CD4-positive, alpha-beta T cell (primary cell): ENCODE measurements at regions of chr20 and their contacts with region 1.

Region 1: DNA sequence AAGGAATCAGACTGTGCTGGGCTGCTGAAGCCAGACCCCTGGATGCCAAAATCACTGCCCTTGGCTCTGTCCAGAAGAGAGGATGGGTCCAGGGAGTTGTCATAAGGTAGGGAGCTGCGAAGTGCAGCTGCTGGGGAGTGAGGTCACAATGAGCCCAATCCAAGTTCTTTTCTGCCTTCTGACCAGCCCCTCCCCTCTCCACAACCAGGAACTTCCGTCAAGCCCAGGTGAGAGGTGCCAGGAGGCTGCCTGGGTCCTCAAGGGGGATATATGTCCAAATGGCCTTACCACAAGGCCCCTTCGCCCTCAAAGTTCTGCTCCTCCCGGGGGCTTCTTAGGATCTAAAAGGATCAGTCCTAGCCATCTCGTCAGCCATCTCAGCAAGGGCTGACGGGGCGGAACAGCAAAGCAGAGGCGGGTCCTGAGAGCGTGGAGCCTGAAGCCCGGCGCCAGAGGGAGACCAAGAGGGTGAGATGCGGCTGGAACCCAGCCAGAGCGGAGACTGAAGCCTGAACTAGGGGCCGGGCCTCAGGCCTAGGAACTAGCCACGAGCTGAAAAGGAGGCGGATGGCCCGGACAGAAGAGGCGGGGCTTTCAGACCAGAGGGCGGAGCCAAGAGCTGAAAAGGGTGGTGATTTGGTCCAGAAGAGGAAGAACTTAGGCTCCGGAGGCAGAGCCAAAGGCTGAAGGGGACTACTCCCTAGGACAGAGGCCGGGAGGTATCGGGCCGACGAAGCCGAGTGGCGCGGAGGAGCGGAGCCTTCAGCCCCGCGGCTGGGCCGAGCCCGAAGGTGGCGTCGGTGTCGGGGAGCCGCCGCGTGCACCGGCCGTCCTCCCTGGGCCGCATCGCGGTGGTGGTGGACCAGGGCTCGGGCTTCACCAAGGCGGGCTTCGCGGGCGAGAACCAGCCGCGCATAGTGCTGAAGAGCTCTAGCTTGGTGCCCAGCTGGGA is at the start of gene ACTL10:
- DNase-seq: peak; percentile 54 to 92 (median 69)
- ATAC-seq: peak; percentile 46
- H3K4me3 ChIP-seq: peak within 1 kb of the TSS; percentile 72
- H3K4me3 Mint-ChIP-seq: peak within 1 kb of the TSS; percentile 93
- H3K27ac ChIP-seq: peak within 1 kb of the TSS; percentile 63 to 69
- H3K27ac Mint-ChIP-seq: peak within 1 kb of the TSS; percentile 92
- H3K4me1 ChIP-seq: peaks cover 52% of the 10 kb centered on the region
- H3K4me1 Mint-ChIP-seq: peaks cover 35% of the 10 kb centered on the region
- H3K27me3 ChIP-seq: no peaks in the 10 kb centered on the region
- H3K27me3 Mint-ChIP-seq: no peaks in the 10 kb centered on the region
- CTCF ChIP-seq: no peak
- total RNA-seq, gene ACTL10: 0.28 to 0.55 TPM

Region 2: DNA sequence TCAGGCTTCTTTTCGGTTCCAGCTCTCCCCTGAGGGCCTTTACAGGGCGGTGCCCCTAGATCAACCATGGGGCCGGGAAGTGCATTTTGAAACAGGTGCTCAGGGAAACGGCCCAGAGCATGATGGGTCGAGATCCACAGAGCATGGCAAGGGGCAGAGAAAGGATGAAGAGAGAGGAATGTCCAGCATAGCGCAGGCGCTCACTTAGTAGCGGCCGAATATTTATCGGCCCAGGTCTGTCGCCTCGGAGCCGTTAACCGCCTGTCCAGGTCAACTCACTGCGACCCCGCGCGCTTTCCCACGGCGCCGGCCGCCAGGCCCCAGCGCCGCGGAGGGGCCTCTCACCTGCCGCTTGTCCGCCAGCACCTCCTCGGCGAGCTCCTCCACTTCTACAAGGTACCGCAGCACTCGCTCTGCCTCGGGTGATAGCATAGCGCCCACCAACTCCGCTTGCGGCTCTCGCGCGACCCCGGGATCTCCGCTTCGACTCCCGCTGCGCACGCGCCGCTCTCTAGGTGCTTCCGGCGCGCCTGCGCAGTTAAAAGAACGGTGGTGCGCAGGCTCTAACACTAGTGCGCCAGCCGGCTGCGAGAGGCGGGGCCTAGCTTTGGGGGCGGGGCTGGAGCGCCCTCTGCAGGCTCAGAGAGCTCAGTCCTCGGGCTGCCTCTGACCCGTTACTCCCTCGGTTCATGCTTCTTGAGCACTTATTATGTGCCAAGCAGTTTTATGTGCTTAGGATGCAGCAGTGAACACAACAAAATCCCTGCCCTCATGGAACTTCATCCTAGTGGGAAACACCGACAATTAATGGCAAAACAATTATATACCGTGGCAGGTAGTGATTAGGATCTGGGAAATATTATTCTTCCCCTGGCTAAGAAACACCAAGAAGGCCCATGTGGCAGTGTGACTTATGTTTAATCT is 1714.8 kb before region 1 on chr20 and contains the start of gene PDRG1:
- CTCF ChIA-PET with region 1: no interaction called
- POLR2A ChIA-PET with region 1: no interaction called
- intact Hi-C with region 1: loop called in 1 of 2 experiments (anchors 10 kb)
- DNase-seq: peak; percentile 93 to 99 (median 97)
- ATAC-seq: peak; percentile 99
- H3K4me3 ChIP-seq: peak within 1 kb of the TSS; percentile 92
- H3K4me3 Mint-ChIP-seq: peak within 1 kb of the TSS; percentile 98
- H3K27ac ChIP-seq: peak within 1 kb of the TSS in 1 of 2 donors; percentile 10
- H3K27ac Mint-ChIP-seq: peak within 1 kb of the TSS; percentile 84
- H3K4me1 ChIP-seq: peaks cover 26% of the 10 kb centered on the region
- H3K4me1 Mint-ChIP-seq: peaks cover 35% of the 10 kb centered on the region
- H3K27me3 ChIP-seq: peaks cover 0 to 6% of the 10 kb centered on the region in 2 experiments
- H3K27me3 Mint-ChIP-seq: peaks cover 20% of the 10 kb centered on the region
- CTCF ChIP-seq: peak; percentile 80
- total RNA-seq, gene PDRG1: 6.5 to 7.1 TPM

Region 3: DNA sequence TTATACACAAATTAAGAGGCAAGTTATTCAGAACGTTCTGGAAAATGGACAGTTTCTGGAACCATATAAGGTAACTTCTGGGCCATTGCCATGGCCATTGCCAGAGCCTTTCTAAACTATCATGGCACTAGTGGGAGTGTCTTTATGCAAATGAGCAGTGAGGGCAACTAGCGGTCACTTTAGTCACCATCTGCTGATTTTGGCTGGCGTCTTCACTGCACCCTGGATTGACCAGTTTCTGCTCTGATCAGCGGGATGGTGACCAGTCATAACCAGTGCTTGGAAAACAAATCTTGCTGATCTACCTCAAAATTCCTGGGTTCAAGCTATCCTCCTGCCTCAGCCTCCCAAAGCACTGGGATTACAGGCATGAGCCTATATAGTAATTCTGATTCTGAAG is 215.7 kb before region 1 on chr20:
- CTCF ChIA-PET with region 1: interaction called, 4 read pairs
- POLR2A ChIA-PET with region 1: interaction called, 3 read pairs
- intact Hi-C with region 1: loop called (anchors 1 to 2 kb)
- DNase-seq: no peak
- ATAC-seq: no peak
- H3K4me3 ChIP-seq: no peak overlapping the region
- H3K4me3 Mint-ChIP-seq: no peak overlapping the region
- H3K27ac ChIP-seq: no peak overlapping the region
- H3K27ac Mint-ChIP-seq: no peak overlapping the region
- H3K4me1 ChIP-seq: no peaks in the 10 kb centered on the region
- H3K4me1 Mint-ChIP-seq: no peaks in the 10 kb centered on the region
- H3K27me3 ChIP-seq: no peaks in the 10 kb centered on the region
- H3K27me3 Mint-ChIP-seq: no peaks in the 10 kb centered on the region
- CTCF ChIP-seq: no peak

Region 4: GRCh38 chr20:33515569-33516216 is 150.9 kb before region 1 on chr20:
- CTCF ChIA-PET with region 1: interaction called, 12 read pairs
- POLR2A ChIA-PET with region 1: no interaction called
- intact Hi-C with region 1: no loop called
- DNase-seq: peak in 2 of 14 experiments; percentile 16 to 18
- ATAC-seq: no peak
- H3K4me3 ChIP-seq: no peak overlapping the region
- H3K4me3 Mint-ChIP-seq: no peak overlapping the region
- H3K27ac ChIP-seq: no peak overlapping the region
- H3K27ac Mint-ChIP-seq: no peak overlapping the region
- H3K4me1 ChIP-seq: peaks cover 4% of the 10 kb centered on the region
- H3K4me1 Mint-ChIP-seq: peaks cover 28% of the 10 kb centered on the region
- H3K27me3 ChIP-seq: no peaks in the 10 kb centered on the region
- H3K27me3 Mint-ChIP-seq: no peaks in the 10 kb centered on the region
- CTCF ChIP-seq: peak; percentile 37

Region 5: GRCh38 chr20:33679758-33680485 is 13.4 kb after region 1 on chr20:
- CTCF ChIA-PET with region 1: interaction called, 15 read pairs
- POLR2A ChIA-PET with region 1: interaction called, 45 read pairs
- intact Hi-C with region 1: no loop called
- DNase-seq: peak in 6 of 14 experiments; percentile 30 to 85 (median 68)
- ATAC-seq: peak; percentile 53
- H3K4me3 ChIP-seq: no peak overlapping the region
- H3K4me3 Mint-ChIP-seq: peak overlapping the region; percentile 51
- H3K27ac ChIP-seq: peak overlapping the region in 1 of 2 donors; percentile 45
- H3K27ac Mint-ChIP-seq: peak overlapping the region; percentile 66
- H3K4me1 ChIP-seq: peaks cover 63% of the 10 kb centered on the region
- H3K4me1 Mint-ChIP-seq: peaks cover 49% of the 10 kb centered on the region
- H3K27me3 ChIP-seq: no peaks in the 10 kb centered on the region
- H3K27me3 Mint-ChIP-seq: no peaks in the 10 kb centered on the region
- CTCF ChIP-seq: no peak

Region 6: DNA sequence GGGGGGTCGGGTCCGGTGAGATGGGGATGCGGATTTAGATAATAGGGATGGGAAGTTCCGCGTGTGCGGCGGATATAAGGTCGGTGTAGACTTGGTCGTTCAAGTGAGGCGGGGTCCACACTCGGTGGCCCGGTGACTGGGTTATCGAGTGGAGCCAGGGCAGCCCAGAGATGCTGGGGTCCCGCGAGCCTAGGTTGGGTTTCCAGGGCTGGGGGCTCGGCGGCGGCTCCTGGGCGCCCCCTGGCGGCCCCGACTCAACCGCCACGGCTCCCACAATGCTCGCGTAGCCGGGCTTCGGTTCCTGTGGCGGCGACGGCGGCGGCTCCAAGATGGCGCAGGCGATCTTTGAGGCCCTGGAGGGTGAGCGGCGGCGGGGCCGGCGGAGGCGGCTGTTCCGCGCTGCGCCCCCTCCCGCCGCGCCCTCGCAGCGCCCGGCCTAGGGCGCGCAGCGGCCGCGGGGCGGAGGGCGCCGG is 65.2 kb after region 1 on chr20 and contains the start of gene ZNF341:
- CTCF ChIA-PET with region 1: interaction called, 7 read pairs
- POLR2A ChIA-PET with region 1: interaction called, 24 read pairs
- intact Hi-C with region 1: loop called in 1 of 2 experiments (anchors 10 kb)
- DNase-seq: peak in 13 of 14 experiments; percentile 80 to 96 (median 87)
- ATAC-seq: peak; percentile 83
- H3K4me3 ChIP-seq: peak within 1 kb of the TSS; percentile 85
- H3K4me3 Mint-ChIP-seq: peak within 1 kb of the TSS; percentile 93
- H3K27ac ChIP-seq: peak within 1 kb of the TSS; percentile 57 to 70
- H3K27ac Mint-ChIP-seq: peak within 1 kb of the TSS; percentile 96
- H3K4me1 ChIP-seq: peaks cover 28% of the 10 kb centered on the region
- H3K4me1 Mint-ChIP-seq: peaks cover 22% of the 10 kb centered on the region
- H3K27me3 ChIP-seq: no peaks in the 10 kb centered on the region
- H3K27me3 Mint-ChIP-seq: no peaks in the 10 kb centered on the region
- CTCF ChIP-seq: peak; percentile 76
- total RNA-seq, gene ZNF341: 2.1 to 2.7 TPM